Heart left ventricle (tissue), 16 donors: ENCODE measurements at regions of chr4 and their contacts with region 1.

Region 1: DNA sequence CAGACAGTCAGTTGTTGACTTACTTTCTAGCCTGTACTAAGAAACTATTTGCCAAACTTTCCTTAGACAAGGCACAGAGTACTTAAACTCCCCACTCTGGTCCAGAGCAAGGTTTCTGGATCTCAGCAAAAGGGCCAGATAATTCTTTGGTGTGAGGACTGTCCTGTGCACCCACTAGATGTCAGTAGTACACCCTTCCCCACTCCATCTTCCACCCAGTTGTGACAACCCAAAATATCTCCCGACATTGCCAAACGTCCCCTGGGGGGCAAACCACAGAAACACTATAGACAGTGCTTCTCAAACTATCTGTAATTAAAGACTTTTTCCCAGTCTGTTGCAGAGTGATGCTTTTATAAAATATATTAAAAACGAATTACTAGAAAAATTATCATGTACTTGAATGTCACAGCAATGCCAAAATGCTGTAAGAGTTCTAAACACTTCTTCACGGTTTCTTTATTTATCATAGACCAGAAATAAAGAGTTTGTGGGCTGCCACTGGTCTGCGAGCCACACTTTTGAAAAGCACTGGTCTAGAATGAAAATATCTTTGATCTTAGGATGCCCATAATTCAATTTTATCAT is 203.5 kb downstream of the PRDM5 start:
- DNase-seq: peak in 3 of 5 donors; percentile 29 to 30 (median 29)
- ATAC-seq: peak; percentile 83 to 95 (median 87)
- H3K4me3 ChIP-seq: peak overlapping the region in 2 of 12 donors; percentile 5 to 25
- H3K27ac ChIP-seq: no peak overlapping the region
- H3K4me1 ChIP-seq: peaks cover 0 to 21% (median 2%) of the 10 kb centered on the region in 12 donors
- H3K27me3 ChIP-seq: no peaks in the 10 kb centered on the region
- CTCF ChIP-seq: peak; percentile 39 to 76 (median 64)
- POLR2A ChIP-seq: no peak

Region 2: DNA sequence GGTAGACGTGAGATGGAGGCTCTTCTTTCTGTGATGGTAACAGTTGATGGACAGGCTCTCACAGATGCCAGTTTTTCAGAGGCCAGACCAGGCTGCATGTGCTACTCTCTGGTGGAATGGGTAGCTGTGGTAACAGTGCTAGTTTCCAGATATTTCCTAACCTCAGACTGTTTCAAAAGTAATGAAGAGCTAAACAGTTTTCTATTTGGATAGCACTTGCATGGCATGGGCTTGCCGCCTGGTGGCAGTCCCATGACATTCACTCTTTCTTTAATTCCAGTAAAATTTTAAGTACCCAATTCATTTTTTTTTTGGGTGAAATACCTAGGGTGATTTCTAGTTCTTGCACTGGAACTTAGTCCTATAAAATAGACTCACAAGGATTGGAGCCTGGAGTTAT is 432.3 kb before region 1 on chr4:
- intact Hi-C with region 1: no loop called
- DNase-seq: no peak
- ATAC-seq: no peak
- H3K4me3 ChIP-seq: no peak overlapping the region
- H3K27ac ChIP-seq: no peak overlapping the region
- H3K4me1 ChIP-seq: no peaks in the 10 kb centered on the region
- H3K27me3 ChIP-seq: no peaks in the 10 kb centered on the region
- CTCF ChIP-seq: no peak
- POLR2A ChIP-seq: no peak

Region 3: DNA sequence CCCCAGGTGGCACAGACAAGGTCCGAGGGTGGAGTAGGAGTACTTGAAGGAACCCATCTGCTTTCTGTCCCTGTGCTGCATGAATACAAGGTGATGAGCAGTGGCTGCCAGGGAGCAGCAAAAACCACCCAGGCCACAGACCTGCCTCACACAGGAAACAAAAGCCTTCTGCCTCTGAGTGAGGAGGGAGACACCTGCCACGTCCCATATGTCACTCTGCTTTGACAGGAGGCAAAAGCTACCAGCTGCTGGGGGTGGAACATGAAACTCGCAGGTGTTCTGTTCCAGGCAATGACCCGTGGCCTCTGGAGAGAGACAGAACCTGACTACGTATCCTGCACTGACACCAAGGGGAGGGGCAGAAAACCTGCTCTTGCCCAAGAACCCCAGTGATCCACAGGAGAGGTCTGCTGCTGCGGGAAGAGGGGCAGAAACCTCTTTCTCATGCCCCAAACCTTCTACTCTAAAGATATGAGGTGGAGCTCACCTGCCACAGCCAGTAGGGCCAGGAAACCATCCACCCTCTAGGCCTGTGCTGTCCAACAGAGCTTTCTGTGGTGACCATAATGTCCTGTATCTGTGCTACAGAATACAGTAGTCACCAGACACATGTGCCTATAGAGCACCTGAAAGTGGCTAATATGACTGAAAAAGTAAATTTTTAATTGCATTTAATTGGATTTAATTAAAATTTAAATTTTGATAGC is 30.5 kb after region 1 on chr4:
- intact Hi-C with region 1: no loop called
- DNase-seq: no peak
- ATAC-seq: peak in 1 of 4 donors; percentile 20
- H3K4me3 ChIP-seq: no peak overlapping the region
- H3K27ac ChIP-seq: no peak overlapping the region
- H3K4me1 ChIP-seq: peaks cover 0 to 5% (median 0%) of the 10 kb centered on the region in 12 donors
- H3K27me3 ChIP-seq: no peaks in the 10 kb centered on the region
- CTCF ChIP-seq: no peak
- POLR2A ChIP-seq: no peak

Region 4: GRCh38 chr4:120801137-120801758 is 82.2 kb after region 1 on chr4:
- intact Hi-C with region 1: loop called in 1 of 10 experiments (anchors 5 kb)
- DNase-seq: peak in 4 of 5 donors; percentile 46 to 64 (median 56)
- ATAC-seq: peak; percentile 88 to 97 (median 94)
- H3K4me3 ChIP-seq: no peak overlapping the region
- H3K27ac ChIP-seq: peak overlapping the region in 10 of 12 donors; percentile 2 to 72 (median 50)
- H3K4me1 ChIP-seq: peaks cover 0 to 13% (median 3%) of the 10 kb centered on the region in 12 donors
- H3K27me3 ChIP-seq: no peaks in the 10 kb centered on the region
- CTCF ChIP-seq: no peak
- POLR2A ChIP-seq: no peak

Region 5: DNA sequence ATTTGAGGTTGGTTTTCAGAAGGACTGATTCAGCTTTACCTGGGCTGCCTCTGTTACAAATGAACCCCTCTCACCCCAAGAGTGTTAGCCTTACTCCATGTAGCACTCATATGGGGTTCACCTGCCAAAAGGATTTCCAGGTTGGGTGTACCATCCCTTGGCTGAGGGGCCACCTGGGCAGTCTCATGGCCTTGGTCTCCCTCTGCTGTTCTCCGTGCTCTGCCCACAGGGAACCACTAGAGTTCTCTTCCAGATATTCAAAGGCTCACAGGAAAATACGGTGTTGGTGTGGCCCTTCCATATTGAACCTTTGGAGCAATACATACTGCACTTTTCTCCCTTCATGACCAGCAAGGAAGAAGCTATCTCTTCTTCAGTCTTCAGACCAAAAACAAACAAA is 221.5 kb after region 1 on chr4:
- intact Hi-C with region 1: loop called in 1 of 10 experiments (anchors 10 kb)
- DNase-seq: no peak
- ATAC-seq: peak in 2 of 4 donors; percentile 41 to 57
- H3K4me3 ChIP-seq: no peak overlapping the region
- H3K27ac ChIP-seq: no peak overlapping the region
- H3K4me1 ChIP-seq: no peaks in the 10 kb centered on the region
- H3K27me3 ChIP-seq: no peaks in the 10 kb centered on the region
- CTCF ChIP-seq: peak in 9 of 12 donors; percentile 11 to 34 (median 20)
- POLR2A ChIP-seq: no peak

Region 6: DNA sequence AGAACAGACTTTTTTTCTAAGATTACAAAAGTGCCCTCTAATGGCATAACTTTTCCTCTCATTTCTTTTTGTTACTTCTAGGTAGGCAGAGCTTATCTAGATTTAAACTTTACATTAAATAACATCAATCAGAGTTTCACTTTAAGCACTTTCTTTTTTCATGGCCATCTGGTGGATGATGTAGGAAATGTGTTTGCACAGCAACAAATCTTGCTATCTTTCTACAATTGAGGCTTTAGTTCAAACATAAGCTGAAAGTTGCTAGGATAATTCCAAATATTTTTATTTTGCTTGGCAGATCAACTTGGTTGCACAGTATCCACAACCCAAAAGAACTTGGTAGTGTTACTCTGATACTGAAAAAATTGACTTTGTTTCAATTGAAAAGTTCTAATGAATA is 331.2 kb after region 1 on chr4:
- intact Hi-C with region 1: loop called in 1 of 10 experiments (anchors 2 kb)
- DNase-seq: no peak
- ATAC-seq: no peak
- H3K4me3 ChIP-seq: no peak overlapping the region
- H3K27ac ChIP-seq: no peak overlapping the region
- H3K4me1 ChIP-seq: peaks cover 0 to 8% (median 0%) of the 10 kb centered on the region in 12 donors
- H3K27me3 ChIP-seq: no peaks in the 10 kb centered on the region
- CTCF ChIP-seq: peak in 8 of 12 donors; percentile 7 to 49 (median 38)
- POLR2A ChIP-seq: no peak